MCF 10A (cell line): ENCODE measurements at regions of chr6 and their contacts with region 1.

Region 1: GRCh38 chr6:137112067-137112355 is 61.4 kb downstream of the IL22RA2 start:
- DNase-seq: peak; percentile 85
- H3K4me3 Mint-ChIP-seq: peak overlapping the region; percentile 7
- H3K27ac Mint-ChIP-seq: peak overlapping the region; percentile 61
- H3K4me1 Mint-ChIP-seq: peaks cover 17% of the 10 kb centered on the region
- H3K27me3 Mint-ChIP-seq: no peaks in the 10 kb centered on the region
- CTCF ChIP-seq: no peak

Region 2: DNA sequence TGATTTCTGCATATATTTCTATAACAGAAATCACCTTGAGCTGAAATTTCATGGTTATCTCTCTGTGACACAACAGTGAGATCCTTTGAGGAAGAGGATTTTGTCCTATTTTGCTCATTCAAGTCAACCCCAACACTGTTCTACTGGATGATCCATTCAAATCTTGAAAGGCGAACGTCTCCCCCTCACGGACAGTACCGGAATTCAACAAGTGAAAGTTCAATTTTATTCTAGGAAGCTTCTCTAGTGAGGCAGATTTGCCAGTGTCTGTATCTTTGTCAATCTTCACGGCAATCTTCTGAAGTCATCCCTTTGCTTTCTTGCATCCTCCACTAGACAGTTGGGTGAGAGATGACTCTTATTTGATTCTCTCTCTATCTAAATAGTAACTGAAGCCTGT is 1352.2 kb before region 1 on chr6:
- CTCF ChIA-PET with region 1: no interaction called
- POLR2A ChIA-PET with region 1: no interaction called
- intact Hi-C with region 1: no loop called
- DNase-seq: no peak
- H3K4me3 Mint-ChIP-seq: no peak overlapping the region
- H3K27ac Mint-ChIP-seq: no peak overlapping the region
- H3K4me1 Mint-ChIP-seq: no peaks in the 10 kb centered on the region
- H3K27me3 Mint-ChIP-seq: no peaks in the 10 kb centered on the region
- CTCF ChIP-seq: no peak

Region 3: GRCh38 chr6:137122610-137123009 is 10.6 kb after region 1 on chr6:
- CTCF ChIA-PET with region 1: interaction called, 6 read pairs
- POLR2A ChIA-PET with region 1: interaction called, 15 read pairs
- intact Hi-C with region 1: no loop called
- DNase-seq: peak; percentile 41
- H3K4me3 Mint-ChIP-seq: no peak overlapping the region
- H3K27ac Mint-ChIP-seq: no peak overlapping the region
- H3K4me1 Mint-ChIP-seq: no peaks in the 10 kb centered on the region
- H3K27me3 Mint-ChIP-seq: no peaks in the 10 kb centered on the region
- CTCF ChIP-seq: no peak